Esophagus squamous epithelium (tissue), 5 donors: ENCODE measurements at regions of chr17 and their contacts with region 1.

Region 1: GRCh38 chr17:30336369-30337171 is 2.7 kb upstream of the TMIGD1 start:
- DNase-seq: no peak
- H3K4me3 ChIP-seq: no peak overlapping the region
- H3K27ac ChIP-seq: no peak overlapping the region
- H3K4me1 ChIP-seq: peaks cover 0 to 49% (median 15%) of the 10 kb centered on the region in 3 donors
- H3K27me3 ChIP-seq: no peaks in the 10 kb centered on the region
- CTCF ChIP-seq: peak; percentile 37 to 79 (median 62)
- POLR2A ChIP-seq: no peak

Region 2: GRCh38 chr17:30124273-30124796 is 212.2 kb before region 1 on chr17:
- intact Hi-C with region 1: loop called (anchors 10 kb)
- DNase-seq: no peak
- H3K4me3 ChIP-seq: no peak overlapping the region
- H3K27ac ChIP-seq: no peak overlapping the region
- H3K4me1 ChIP-seq: peaks cover 0 to 43% (median 5%) of the 10 kb centered on the region in 3 donors
- H3K27me3 ChIP-seq: no peaks in the 10 kb centered on the region
- CTCF ChIP-seq: no peak
- POLR2A ChIP-seq: no peak

Region 3: GRCh38 chr17:30187573-30187972 is 149.0 kb before region 1 on chr17:
- intact Hi-C with region 1: no loop called
- DNase-seq: no peak
- H3K4me3 ChIP-seq: no peak overlapping the region
- H3K27ac ChIP-seq: no peak overlapping the region
- H3K4me1 ChIP-seq: peaks cover 0 to 4% (median 0%) of the 10 kb centered on the region in 3 donors
- H3K27me3 ChIP-seq: no peaks in the 10 kb centered on the region
- CTCF ChIP-seq: no peak
- POLR2A ChIP-seq: no peak